OCI-LY7 (cell line): ENCODE measurements at regions of chr5 and their contacts with region 1.

Region 1: DNA sequence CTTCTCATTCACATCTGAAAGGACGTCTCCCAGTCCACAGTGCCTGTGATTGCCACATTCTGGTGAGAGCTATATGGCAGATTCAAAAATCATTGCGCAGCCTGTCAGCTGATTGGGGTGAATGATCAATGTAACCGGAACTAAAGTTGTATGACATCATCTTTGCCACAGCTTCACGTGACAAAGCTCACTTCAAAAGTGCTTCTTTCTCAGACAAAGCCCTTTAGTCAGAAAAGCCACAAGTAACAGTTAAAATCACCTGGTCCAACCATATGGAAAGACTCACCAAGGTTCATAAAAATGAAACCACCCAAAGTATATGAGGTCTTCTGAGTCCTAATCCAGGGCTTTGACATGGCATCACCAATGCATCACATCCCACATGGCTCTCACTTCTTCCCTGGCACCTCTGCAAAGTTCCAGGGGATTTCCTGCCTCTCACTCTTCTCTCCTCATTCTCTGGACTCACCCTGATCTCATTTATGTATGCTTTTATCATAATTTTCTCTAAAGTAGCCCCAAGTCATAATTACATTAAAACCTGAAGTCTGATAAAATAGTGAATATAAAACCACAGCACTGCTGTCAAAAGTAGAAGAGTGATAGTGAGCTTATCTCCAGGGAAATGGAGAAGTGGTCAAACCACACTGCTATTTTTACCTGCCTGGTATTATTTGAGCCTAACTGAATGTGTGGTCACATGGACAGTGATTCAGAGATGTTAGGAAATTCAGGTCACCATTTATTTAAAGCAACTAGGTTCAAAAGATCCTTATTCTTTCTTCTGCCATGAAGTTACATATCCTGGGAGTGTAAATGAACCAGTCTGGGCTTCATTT is 193.1 kb upstream of the PTGER4 start:
- DNase-seq: peak; percentile 50
- H3K4me3 ChIP-seq: peak overlapping the region; percentile 6
- H3K27ac ChIP-seq: peak overlapping the region; percentile 19
- H3K4me1 ChIP-seq: peaks cover 34% of the 10 kb centered on the region
- CTCF ChIP-seq: no peak

Region 2: DNA sequence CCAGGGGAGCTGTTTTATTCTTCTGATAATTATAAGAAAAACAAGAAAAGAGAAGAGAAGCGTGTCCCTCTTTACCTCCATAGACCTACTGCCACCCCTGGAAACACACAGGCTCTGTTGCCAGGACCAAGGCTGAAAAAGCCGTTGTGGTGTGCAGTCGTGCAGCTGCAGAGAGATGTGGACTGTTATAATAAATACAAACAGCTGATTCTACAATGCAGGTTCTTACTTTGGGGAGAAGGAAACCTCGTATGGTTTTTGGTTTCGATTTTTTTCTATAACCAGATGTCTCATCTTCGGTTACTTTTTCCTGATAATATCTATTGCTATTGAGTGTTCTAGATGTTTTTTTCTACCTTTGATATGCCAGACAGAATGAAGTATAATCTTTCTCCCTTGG is 1295.4 kb before region 1 on chr5:
- CTCF ChIA-PET with region 1: no interaction called
- POLR2A ChIA-PET with region 1: no interaction called
- intact Hi-C with region 1: no loop called
- DNase-seq: no peak
- H3K4me3 ChIP-seq: no peak overlapping the region
- H3K27ac ChIP-seq: no peak overlapping the region
- H3K4me1 ChIP-seq: no peaks in the 10 kb centered on the region
- CTCF ChIP-seq: no peak

Region 3: GRCh38 chr5:40033411-40033810 is 453.2 kb before region 1 on chr5:
- CTCF ChIA-PET with region 1: no interaction called
- POLR2A ChIA-PET with region 1: no interaction called
- intact Hi-C with region 1: loop called (anchors 5 kb)
- DNase-seq: peak; percentile 96
- H3K4me3 ChIP-seq: peak overlapping the region; percentile 56
- H3K27ac ChIP-seq: peak overlapping the region; percentile 83
- H3K4me1 ChIP-seq: peaks cover 22% of the 10 kb centered on the region
- CTCF ChIP-seq: no peak

Region 4: DNA sequence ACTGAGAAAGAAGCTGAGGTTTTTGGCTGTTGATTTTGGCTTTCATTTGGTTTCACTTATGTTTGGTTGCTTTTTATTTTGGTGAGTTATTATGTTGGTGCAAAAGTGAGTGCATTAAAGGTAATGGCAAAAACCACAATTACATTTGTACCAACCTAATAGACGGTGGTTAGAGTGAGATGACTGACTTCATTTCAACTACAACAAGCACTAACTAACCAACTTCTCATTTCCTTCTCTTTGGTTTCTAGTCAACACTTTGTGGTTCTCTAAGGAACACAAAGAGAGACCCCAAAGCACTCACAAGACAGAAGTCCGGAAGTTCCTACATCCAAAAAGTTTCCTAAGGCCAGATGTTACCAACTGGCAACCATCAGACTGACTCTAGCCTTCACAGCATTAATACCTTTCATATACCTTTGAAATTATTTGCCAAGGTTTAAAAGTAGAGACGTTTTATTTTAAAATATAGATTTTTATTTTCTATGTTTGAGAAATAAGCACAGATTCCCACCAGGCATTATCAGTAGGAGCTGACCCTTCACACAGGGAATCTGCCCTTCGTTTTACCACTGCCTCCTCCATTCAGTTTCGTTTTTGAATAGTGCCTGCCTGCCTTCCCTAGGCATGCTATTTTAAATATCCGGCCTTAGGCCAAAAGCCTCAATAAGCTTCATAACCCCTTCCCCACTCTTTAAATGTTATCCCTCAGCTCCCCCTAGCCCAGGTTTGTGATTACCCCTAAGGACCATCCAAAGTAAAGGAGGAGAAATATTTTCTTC is 108.1 kb before region 1 on chr5:
- CTCF ChIA-PET with region 1: no interaction called
- POLR2A ChIA-PET with region 1: no interaction called
- intact Hi-C with region 1: loop called (anchors 5 kb)
- DNase-seq: no peak
- H3K4me3 ChIP-seq: no peak overlapping the region
- H3K27ac ChIP-seq: no peak overlapping the region
- H3K4me1 ChIP-seq: peaks cover 6% of the 10 kb centered on the region
- CTCF ChIP-seq: no peak

Region 5: DNA sequence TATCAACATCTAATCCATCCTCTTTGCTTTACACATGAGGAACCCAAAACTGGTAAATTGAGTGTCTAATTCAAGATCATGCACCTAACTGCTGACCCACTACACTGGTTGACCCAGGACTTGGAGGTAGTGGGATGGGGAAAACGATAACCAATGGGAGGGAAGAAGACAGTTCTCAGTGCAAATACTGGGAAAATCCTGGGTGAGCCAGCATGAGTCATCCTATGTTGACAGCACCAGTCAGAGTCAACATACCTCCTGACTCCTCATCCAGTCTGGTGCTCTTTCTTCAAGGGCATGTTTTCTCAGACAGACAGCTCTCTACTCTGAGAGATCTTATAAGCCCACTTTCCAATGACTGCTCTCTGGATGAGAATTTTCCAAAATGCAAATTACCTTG is 39.7 kb before region 1 on chr5:
- CTCF ChIA-PET with region 1: no interaction called
- POLR2A ChIA-PET with region 1: no interaction called
- intact Hi-C with region 1: no loop called
- DNase-seq: no peak
- H3K4me3 ChIP-seq: no peak overlapping the region
- H3K27ac ChIP-seq: no peak overlapping the region
- H3K4me1 ChIP-seq: no peaks in the 10 kb centered on the region
- CTCF ChIP-seq: no peak

Region 6: GRCh38 chr5:40594811-40595210 is 108.2 kb after region 1 on chr5:
- CTCF ChIA-PET with region 1: no interaction called
- POLR2A ChIA-PET with region 1: interaction called, 4 read pairs
- intact Hi-C with region 1: loop called (anchors 5 kb)
- DNase-seq: no peak
- H3K4me3 ChIP-seq: no peak overlapping the region
- H3K27ac ChIP-seq: no peak overlapping the region
- H3K4me1 ChIP-seq: peaks cover 21% of the 10 kb centered on the region
- CTCF ChIP-seq: no peak

Region 7: DNA sequence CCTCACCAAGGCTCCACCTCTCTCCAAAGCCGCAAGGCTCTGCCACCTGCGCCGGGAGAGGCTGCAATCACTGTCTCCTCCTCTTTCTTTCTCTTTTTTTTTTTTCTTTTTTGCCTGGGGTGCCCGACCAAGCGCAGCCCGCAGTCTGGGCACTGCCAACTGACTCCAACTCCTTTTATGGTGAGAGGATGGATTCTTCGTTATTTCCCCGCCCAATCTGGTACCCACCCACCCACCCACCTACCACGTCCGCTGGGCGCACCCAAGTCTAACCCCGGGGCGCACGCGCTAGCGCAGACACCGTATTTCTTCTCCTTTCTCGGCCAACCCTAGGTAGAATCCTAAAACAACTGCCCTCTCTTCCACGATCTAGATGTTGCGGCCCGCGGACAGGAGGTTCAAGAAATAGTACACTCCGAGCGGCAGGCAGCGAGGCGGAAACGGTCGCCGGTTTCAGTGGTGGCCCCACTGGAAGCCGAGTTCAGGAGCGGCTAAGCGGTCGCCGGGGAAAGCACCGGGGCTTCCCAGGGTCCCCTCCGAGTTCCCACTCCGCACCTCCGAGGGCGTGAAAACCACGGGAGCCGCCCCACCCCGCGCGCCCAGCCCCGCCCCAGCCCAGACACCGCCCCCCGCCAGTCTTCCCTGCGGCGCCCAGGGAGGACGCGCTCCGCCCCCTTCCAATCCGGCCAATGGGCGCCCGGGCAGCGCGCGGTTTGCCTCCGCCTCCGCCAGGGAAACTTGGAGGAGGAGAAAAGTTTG is 192.7 kb after region 1 on chr5:
- CTCF ChIA-PET with region 1: no interaction called
- POLR2A ChIA-PET with region 1: interaction called, 3 read pairs
- intact Hi-C with region 1: loop called (anchors 5 kb)
- DNase-seq: peak; percentile 67
- H3K4me3 ChIP-seq: peak overlapping the region; percentile 82
- H3K27ac ChIP-seq: no peak overlapping the region
- H3K4me1 ChIP-seq: peaks cover 15% of the 10 kb centered on the region
- CTCF ChIP-seq: no peak

Region 8: DNA sequence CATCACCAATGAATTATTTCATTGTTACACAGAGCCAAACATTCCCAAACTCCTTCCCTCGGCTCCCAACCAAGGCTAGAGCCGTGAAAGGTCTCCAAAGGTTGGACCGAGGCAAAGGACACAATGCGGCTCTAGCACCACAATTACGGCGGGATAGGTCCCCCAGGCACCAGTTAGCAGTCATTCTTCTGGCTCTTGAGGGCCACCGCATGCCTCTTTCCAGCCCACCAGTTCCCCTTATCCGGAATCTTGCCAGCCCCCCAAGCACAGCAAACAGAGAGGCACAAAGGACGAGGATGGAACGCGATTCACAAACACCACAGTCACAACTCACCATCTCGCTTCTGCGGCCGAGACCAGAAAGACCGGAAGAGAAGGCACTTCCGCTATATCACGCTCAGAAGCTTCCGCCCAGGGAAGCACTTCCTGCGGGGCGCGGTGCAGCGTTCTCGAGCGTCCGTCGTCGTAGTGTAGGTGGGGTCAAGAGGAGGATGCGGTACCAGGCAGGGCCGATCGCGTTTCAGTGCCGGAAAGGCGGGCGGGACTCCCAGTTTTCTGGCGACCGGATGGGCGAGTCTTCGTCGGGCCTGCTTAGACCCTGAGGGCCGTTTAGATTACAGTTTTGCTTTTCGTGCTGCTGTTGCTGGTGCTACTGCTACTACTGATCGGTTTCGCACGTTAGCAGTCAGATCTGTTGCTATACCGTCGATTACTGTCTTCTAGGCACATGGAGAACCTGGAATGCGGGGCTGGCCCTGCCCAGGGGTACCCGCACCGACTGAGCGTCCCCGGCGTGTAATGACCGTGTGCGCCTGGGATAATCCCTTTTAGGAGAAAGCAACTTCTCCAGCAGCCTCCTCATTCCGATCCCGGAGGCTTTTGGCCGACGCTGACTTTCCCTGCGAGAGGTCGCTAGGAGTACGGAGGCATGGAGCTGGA is 348.5 kb after region 1 on chr5 and contains the start of gene RPL37:
- CTCF ChIA-PET with region 1: no interaction called
- POLR2A ChIA-PET with region 1: no interaction called
- intact Hi-C with region 1: loop called (anchors 10 kb)
- DNase-seq: peak; percentile 97
- H3K4me3 ChIP-seq: peak within 1 kb of the TSS; percentile 88
- H3K27ac ChIP-seq: peak within 1 kb of the TSS; percentile 79
- H3K4me1 ChIP-seq: peaks cover 37% of the 10 kb centered on the region
- CTCF ChIP-seq: no peak
- total RNA-seq, gene RPL37: 2,743 and 2,779 TPM in 2 replicates